ENCODE measurements at regions of chr4 and their contacts with region 1.

Region 1: DNA sequence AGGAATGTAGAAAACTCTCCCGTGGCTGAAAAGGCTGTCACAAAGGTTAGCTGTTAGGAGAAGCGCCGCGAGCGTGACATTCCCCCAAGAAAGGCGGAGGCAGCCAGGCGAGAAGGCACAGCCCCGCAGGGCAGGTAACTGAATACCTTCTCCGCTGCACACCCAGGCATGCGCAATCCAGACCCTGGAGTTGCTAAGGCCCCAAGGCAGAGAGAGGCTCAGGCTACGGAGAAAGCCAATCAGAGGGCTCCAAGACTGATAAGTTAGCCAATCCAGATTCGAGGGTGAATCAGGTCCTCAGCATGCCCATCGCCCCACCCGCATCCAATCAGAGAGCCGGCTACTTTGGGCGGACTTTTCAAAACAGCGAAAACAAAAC is 485 bp upstream of the CCNG2 start:
- DNase-seq: peak; percentile 92 to 95 (median 94)
- ATAC-seq: peak; percentile 98 to 99
- H3K4me3 ChIP-seq: peak overlapping the region; percentile 86
- H3K27ac ChIP-seq: peak overlapping the region; percentile 18
- H3K4me1 ChIP-seq: no peaks in the 10 kb centered on the region
- H3K27me3 ChIP-seq: no peaks in the 10 kb centered on the region

Region 2: GRCh38 chr4:76579610-76580375 is 576.7 kb before region 1 on chr4:
- intact Hi-C with region 1: no loop called
- DNase-seq: no peak
- ATAC-seq: no peak
- H3K4me3 ChIP-seq: no peak overlapping the region
- H3K27ac ChIP-seq: no peak overlapping the region
- H3K4me1 ChIP-seq: no peaks in the 10 kb centered on the region
- H3K27me3 ChIP-seq: no peaks in the 10 kb centered on the region

Region 3: GRCh38 chr4:76984127-76984526 is 172.4 kb before region 1 on chr4:
- intact Hi-C with region 1: no loop called
- DNase-seq: peak in 1 of 3 donors; percentile 20
- ATAC-seq: peak in 1 of 2 donors; percentile 5
- H3K4me3 ChIP-seq: no peak overlapping the region
- H3K27ac ChIP-seq: peak overlapping the region; percentile 32
- H3K4me1 ChIP-seq: peaks cover 2% of the 10 kb centered on the region
- H3K27me3 ChIP-seq: no peaks in the 10 kb centered on the region

Region 4: DNA sequence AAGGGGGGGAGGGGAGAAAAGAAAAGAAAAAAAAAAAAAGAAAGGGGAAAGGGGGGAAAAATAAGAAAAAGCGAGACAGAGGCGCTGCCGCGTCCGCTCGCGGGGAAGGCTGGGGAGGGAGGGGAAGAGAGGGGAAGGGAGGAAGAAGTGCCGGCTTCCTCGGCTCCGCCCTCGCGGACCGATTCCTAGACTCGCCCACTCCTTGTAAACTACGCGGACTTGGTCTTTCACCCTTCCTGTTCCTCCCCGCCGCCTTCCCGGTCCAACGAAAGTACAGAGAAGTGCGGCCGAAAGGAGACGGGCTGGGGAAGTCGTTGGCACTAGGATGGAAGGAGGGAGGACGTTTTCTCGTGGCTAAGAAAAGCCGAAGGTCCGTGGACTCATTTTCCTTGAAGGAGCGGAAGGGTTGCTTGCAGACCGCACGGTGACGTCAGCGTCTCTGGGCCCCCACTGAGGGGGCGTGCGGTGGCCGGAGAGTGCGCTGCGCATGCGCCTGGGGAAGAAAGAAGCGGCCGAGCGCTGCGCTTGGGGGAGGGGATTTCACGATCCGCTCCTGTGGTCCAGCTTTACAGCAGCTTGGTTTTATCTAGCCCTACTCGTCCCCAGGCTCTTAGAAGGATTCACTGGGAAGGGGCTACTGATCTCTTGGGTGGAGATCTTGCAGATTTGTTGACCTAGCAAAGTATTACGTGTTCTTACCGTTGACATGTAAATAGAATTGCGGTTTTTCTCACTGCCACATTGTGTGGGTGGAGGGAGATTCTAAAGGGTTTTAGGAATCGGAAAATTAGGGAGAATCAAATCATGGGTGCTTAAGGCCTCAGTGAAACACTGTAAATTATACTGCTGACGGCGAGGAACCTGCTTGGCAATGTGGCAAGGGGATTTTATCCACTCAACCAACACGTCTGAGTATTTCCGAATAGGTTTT is 80.4 kb before region 1 on chr4 and contains the start of gene CCNI:
- intact Hi-C with region 1: loop called in 2 of 4 experiments (anchors 10 kb)
- DNase-seq: peak; percentile 97 to 99 (median 98)
- ATAC-seq: peak; percentile 96
- H3K4me3 ChIP-seq: peak within 1 kb of the TSS; percentile 97
- H3K27ac ChIP-seq: peak within 1 kb of the TSS; percentile 91
- H3K4me1 ChIP-seq: no peaks in the 10 kb centered on the region
- H3K27me3 ChIP-seq: no peaks in the 10 kb centered on the region
- total RNA-seq, gene CCNI: 310 to 338 (median 324) TPM

Region 5: DNA sequence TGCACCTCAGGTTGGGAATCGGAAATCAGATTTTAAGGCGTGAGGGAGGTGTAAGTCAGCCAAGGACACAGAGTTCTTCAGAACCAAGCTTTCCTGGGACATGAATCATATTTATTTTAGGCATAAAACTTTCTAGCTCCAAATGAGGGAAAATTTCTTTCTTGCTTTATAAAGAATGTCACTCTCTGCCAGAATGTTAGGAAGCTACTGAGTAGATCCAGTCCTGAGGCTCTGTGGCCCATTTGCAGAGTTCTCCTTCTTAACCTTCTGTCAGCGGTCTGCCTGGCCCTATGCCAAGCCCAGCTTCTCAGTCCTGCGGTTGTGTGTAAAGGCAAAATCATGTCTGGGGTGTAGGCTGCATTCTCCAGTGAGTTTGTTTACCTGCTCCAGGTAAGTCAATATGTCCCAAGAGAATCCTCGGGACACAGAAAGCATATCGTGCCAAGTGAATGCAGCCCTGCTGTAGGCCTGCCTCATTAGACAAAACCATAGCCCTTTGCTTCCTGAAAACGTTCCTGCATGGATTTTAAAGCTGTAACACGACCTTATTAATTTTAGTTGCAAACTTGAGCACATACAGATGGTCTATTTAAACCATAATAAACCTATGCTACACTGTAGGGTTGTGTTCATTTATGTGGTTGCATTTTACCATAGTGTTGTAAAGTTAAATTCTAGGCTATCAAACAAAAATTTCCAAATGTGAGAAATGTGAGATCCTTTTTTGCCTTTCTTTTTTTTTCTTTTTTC is 51.6 kb before region 1 on chr4:
- intact Hi-C with region 1: loop called in 1 of 4 experiments (anchors 10 kb)
- DNase-seq: peak; percentile 65 to 85 (median 79)
- ATAC-seq: peak; percentile 44 to 68
- H3K4me3 ChIP-seq: no peak overlapping the region
- H3K27ac ChIP-seq: peak overlapping the region; percentile 3
- H3K4me1 ChIP-seq: no peaks in the 10 kb centered on the region
- H3K27me3 ChIP-seq: no peaks in the 10 kb centered on the region

Region 6: DNA sequence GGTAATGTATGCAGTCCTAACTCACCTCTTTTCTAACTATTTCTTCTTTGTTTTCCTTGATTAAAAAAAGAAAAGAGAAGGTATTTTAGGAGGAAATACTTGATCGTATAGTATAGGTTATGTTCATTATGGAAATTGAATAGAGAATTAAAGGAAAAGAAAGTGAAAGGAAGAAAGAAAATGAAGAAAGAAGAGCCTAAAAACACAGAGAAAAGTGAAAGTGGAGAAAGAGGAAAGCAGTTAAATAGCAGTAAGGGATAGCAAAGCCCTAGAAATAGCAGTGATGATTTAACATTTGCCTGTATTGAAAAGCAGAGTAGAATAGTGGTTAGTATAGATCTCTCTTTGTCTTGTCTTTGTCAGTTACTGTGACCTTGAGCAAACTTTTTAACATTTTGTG is 743.1 kb after region 1 on chr4:
- intact Hi-C with region 1: no loop called
- DNase-seq: no peak
- ATAC-seq: no peak
- H3K4me3 ChIP-seq: no peak overlapping the region
- H3K27ac ChIP-seq: no peak overlapping the region
- H3K4me1 ChIP-seq: no peaks in the 10 kb centered on the region
- H3K27me3 ChIP-seq: no peaks in the 10 kb centered on the region